ENCODE measurements at regions of chr21 and their contacts with region 1.

Region 1: DNA sequence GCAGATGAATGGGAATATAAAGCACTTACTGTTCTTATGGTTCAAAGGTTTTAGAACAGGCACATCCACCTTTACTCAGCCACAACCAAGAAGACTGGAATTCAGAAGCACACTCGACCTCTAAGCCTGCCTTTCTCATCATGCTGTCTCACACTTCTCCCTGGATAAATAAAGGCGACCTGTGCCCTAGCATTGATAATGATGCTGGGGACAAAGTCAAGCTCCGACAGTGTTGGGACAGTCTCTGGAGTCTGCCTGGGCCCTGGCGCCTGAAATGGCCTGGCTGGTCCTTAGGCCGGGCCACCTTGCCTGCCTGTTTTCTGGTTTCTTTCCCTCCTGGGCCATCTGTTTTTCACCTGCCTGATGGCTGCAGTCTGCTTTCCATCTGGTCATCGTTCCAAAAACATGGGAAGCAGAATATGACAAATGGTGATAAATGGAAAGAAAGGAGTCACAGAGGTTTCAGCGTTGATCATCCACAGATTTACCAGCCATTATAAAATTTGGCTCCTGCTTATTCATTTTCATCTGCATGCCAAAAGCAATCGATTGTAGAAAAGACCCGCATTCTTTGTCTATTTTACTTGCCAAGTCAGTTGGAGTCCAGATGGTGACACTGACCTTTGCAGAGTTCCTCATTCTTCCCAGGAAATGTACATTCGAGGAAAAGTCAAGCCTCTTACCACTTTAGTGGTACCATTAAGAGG is 91.2 kb upstream of the KCNJ15 start:
- DNase-seq: no peak

Region 2: GRCh38 chr21:37970548-37970947 is 195.1 kb before region 1 on chr21:
- intact Hi-C with region 1: no loop called
- DNase-seq: no peak

Region 3: DNA sequence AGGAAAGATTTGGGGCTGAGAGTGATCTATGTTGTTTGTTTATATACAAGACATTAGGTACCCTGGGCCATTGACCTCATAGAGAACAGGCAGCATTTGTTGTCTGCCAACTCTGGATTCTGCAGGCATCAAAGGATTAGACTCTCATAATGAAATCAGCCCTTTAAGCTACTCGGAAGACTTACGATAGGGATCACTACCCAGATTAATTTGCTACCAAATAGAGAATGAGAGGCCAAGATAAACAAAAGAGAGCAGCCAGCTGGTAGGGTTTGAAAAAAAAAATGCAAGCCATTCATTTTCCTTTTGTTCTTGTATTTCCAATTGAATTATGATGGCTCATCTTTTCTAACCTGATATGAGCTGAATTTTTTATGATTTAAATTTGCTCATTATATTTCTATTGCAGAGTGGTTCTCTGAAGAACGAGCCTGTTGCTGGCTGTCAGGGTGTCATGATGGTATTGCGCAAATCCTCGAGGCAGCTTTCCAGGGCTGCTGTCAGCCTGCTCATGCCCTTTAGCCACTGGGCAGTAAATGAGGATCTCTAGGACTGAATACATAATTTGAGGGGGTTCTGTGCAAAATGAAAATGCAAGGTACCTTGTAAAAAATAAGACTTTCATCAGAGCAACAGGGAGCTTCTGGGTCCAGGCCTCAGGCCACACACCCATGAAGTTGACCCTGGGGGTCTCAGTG is 25.3 kb before region 1 on chr21:
- intact Hi-C with region 1: no loop called
- DNase-seq: peak; percentile 85

Region 4: DNA sequence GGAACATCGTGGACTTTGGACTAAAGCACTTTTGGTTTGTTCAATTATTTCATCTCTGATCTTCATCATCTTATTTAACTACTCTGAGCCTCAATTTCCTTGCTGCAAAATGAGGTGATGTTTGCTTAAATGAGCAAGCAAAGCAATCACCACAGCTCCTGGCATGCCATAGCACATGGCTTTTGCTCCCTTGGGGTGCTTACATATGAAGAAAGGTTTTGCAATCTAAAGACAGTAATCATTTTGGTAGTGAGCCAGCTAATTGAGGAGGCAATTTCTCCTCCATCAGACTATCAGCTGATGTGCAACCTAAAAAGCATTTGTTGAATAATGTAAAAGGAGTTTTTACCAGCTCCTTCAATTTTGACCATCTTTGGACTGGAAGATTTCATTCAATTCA is 22.4 kb after region 1 on chr21:
- intact Hi-C with region 1: no loop called
- DNase-seq: no peak

Region 5: DNA sequence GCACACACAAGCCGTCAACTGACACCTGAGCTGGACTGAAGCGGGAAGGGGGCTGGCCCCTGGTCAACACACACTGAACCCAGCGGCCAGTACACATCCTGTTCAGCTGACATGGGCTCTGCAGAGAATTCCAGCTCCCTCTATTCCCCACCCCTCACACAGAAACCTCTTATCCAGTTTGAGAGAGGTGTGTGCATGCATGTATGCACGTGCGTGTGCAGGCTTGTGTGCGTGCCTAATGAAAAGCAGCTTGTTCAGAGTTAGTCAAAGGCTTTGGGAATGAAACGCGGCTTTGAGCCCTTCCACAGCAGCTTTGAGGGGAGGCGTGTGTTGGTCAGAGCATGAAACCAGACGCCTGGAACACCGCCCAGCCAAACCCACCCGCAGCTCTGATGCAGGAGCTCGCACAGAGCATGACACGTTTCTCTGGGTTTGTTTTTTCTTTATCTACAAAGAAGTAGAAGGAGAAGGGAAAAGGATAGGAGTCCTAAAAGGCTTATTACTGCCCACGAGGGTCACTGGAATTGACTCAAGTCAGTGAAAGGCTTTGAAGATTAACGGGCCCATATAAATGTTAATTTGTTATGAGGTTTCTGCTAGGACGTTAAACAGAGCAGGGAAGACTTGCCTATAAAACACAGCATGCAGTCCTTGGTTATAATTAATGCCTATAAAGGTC is 824.3 kb after region 1 on chr21:
- intact Hi-C with region 1: loop called in 1 of 2 experiments (anchors 5 kb)
- DNase-seq: peak; percentile 79

Measured in posterior vena cava (tissue), 2 donors.